Endothelial cell of umbilical vein (primary cell): ENCODE measurements at regions of chr9 and their contacts with region 1.

Region 1: DNA sequence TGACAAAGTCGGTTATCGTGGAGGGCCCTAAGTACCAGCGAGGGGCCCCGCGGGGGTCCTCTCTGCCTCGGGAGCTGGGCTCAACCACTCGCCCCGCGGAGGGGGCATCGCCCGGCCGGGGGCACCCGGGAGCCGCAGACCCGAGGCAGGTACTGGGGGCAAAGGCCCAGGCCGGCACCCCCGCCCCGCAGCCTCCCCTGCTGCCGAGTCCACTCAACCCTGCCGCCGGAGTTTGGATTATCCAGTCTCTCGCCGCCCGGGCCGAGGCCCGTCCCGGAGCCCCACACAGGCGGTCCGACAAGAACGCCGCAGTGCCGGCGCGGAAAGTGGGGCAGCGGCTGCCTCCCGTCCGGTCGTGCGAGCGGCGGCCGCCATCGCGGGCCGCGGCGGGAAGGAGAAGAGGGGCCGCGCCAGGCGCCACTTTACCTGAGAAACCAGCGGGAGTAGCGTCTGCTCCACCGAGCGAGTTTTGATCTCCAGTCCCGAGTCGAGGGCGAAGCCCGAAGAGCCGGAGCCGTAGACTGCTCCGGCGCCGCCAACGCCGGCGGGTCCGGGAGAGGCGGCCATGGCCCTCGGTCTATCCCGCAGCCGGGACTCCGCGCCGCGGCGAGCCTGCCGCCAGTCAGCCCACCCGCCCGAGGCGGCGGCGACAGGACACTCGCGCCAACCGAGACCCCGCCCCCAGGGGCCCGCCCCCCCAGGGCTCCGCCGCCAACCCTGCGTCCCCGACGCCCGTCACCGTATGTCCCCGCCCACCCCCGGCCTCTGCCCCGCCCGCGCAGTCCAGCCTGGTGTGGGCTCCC is at the start of gene CTNNAL1:
- DNase-seq: peak; percentile 92
- H3K4me3 ChIP-seq: peak within 1 kb of the TSS; percentile 68 to 81 (median 68)
- H3K27ac ChIP-seq: peak within 1 kb of the TSS; percentile 77
- H3K4me1 ChIP-seq: peaks cover 35% of the 10 kb centered on the region
- H3K27me3 ChIP-seq: no peaks in the 10 kb centered on the region
- CTCF ChIP-seq: no peak
- POLR2A ChIP-seq: peak; percentile 92
- total RNA-seq, gene CTNNAL1: 72.0 and 76.2 TPM in 2 replicates

Region 2: GRCh38 chr9:108933718-108934322 is 79.3 kb before region 1 on chr9 and contains the start of gene ELP1:
- CTCF ChIA-PET with region 1: no interaction called
- POLR2A ChIA-PET with region 1: no interaction called
- dilution Hi-C with region 1: no loop called
- intact Hi-C with region 1: loop called (anchors 2 kb)
- DNase-seq: peak; percentile 94
- H3K4me3 ChIP-seq: peak within 1 kb of the TSS; percentile 11 to 74 (median 66)
- H3K27ac ChIP-seq: peak within 1 kb of the TSS; percentile 47
- H3K4me1 ChIP-seq: peaks cover 10% of the 10 kb centered on the region
- H3K27me3 ChIP-seq: no peaks in the 10 kb centered on the region
- CTCF ChIP-seq: peak; percentile 12 to 46
- POLR2A ChIP-seq: no peak
- total RNA-seq, gene ELP1: 21.4 and 21.8 TPM in 2 replicates

Region 3: GRCh38 chr9:108994695-108995094 is 18.4 kb before region 1 on chr9:
- CTCF ChIA-PET with region 1: interaction called, 7 read pairs
- POLR2A ChIA-PET with region 1: no interaction called
- dilution Hi-C with region 1: no loop called
- intact Hi-C with region 1: loop called (anchors 1 kb)
- DNase-seq: peak; percentile 95
- H3K4me3 ChIP-seq: no peak overlapping the region
- H3K27ac ChIP-seq: peak overlapping the region; percentile 49
- H3K4me1 ChIP-seq: peaks cover 50% of the 10 kb centered on the region
- H3K27me3 ChIP-seq: no peaks in the 10 kb centered on the region
- CTCF ChIP-seq: no peak
- POLR2A ChIP-seq: no peak

Region 4: GRCh38 chr9:109098171-109098959 is 85.3 kb after region 1 on chr9:
- CTCF ChIA-PET with region 1: no interaction called
- POLR2A ChIA-PET with region 1: interaction called, 3 read pairs
- dilution Hi-C with region 1: no loop called
- intact Hi-C with region 1: loop called (anchors 1 kb)
- DNase-seq: peak; percentile 97
- H3K4me3 ChIP-seq: peak overlapping the region in 1 of 3 experiments; percentile 21
- H3K27ac ChIP-seq: peak overlapping the region; percentile 52
- H3K4me1 ChIP-seq: peaks cover 54% of the 10 kb centered on the region
- H3K27me3 ChIP-seq: no peaks in the 10 kb centered on the region
- CTCF ChIP-seq: peak; percentile 19 to 33
- POLR2A ChIP-seq: no peak

Region 5: GRCh38 chr9:109119439-109120203 is 106.5 kb after region 1 on chr9 and contains the start of gene TMEM245:
- CTCF ChIA-PET with region 1: interaction called, 3 read pairs
- POLR2A ChIA-PET with region 1: no interaction called
- dilution Hi-C with region 1: no loop called
- intact Hi-C with region 1: loop called (anchors 2 kb)
- DNase-seq: peak; percentile 98
- H3K4me3 ChIP-seq: peak within 1 kb of the TSS; percentile 61 to 75 (median 74)
- H3K27ac ChIP-seq: peak within 1 kb of the TSS; percentile 42
- H3K4me1 ChIP-seq: peaks cover 16% of the 10 kb centered on the region
- H3K27me3 ChIP-seq: no peaks in the 10 kb centered on the region
- CTCF ChIP-seq: no peak
- POLR2A ChIP-seq: peak; percentile 75
- total RNA-seq, gene TMEM245: 39.4 and 44.2 TPM in 2 replicates